ENCODE measurements at regions of chr9 and their contacts with region 1.

Region 1: DNA sequence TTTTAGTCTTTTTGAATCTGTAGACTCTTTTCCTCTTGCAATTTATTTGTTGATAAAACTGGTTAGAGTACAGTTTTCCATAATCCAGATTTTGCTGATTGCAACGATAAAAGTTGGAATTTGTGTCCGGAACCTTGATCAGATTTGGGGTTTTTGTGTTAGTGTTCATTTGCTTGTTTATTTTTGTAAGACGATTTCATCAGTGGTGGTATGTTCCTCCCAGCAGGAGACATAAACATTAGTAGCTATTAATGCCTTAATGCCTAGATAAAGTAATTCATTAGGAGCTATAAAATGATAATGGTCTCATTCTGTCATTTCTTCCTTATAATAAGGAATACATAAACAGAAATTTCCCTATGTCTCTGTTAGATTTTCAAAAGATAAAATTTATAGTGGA is 21.3 kb downstream of the RPS6 start:
- DNase-seq: no peak
- ATAC-seq: no peak
- H3K4me3 ChIP-seq: no peak overlapping the region
- H3K27ac ChIP-seq: no peak overlapping the region
- H3K4me1 ChIP-seq: no peaks in the 10 kb centered on the region
- H3K27me3 ChIP-seq: no peaks in the 10 kb centered on the region
- CTCF ChIP-seq: no peak
- POLR2A ChIP-seq: no peak
- RAD21 ChIP-seq: no peak

Region 2: DNA sequence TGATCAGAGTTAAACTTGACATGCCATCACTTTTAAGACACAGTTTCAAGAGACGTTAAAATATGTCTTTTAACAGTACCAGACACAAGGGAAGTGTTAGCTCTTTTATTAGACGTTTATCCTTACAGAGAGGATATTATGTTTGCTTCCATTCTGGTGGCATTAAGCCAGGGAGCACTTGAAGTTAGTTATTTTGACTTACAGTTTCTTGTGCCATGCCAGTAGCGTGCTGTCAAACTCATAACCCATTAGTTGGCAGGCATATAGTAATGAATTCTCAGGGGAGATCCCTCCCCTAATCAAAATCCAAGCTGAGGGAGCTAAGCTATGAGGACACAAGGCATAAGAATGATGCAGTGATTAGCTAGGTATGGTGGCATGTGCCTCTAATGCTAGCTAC is 45.1 kb before region 1 on chr9:
- CTCF ChIA-PET with region 1: no interaction called
- POLR2A ChIA-PET with region 1: no interaction called
- RAD21 ChIA-PET with region 1: no interaction called
- intact Hi-C with region 1: loop called (anchors 5 kb)
- DNase-seq: no peak
- ATAC-seq: no peak
- H3K4me3 ChIP-seq: no peak overlapping the region
- H3K27ac ChIP-seq: no peak overlapping the region
- H3K4me1 ChIP-seq: no peaks in the 10 kb centered on the region
- H3K27me3 ChIP-seq: no peaks in the 10 kb centered on the region
- CTCF ChIP-seq: no peak
- POLR2A ChIP-seq: no peak
- RAD21 ChIP-seq: no peak

Region 3: GRCh38 chr9:19481971-19482404 is 123.3 kb after region 1 on chr9:
- CTCF ChIA-PET with region 1: no interaction called
- POLR2A ChIA-PET with region 1: no interaction called
- RAD21 ChIA-PET with region 1: no interaction called
- intact Hi-C with region 1: no loop called
- DNase-seq: no peak
- ATAC-seq: no peak
- H3K4me3 ChIP-seq: no peak overlapping the region
- H3K27ac ChIP-seq: no peak overlapping the region
- H3K4me1 ChIP-seq: no peaks in the 10 kb centered on the region
- H3K27me3 ChIP-seq: peaks cover 5% of the 10 kb centered on the region
- CTCF ChIP-seq: no peak
- POLR2A ChIP-seq: no peak
- RAD21 ChIP-seq: no peak